AG04450 (cell line): ENCODE measurements at regions of chr4 and their contacts with region 1.

Region 1: DNA sequence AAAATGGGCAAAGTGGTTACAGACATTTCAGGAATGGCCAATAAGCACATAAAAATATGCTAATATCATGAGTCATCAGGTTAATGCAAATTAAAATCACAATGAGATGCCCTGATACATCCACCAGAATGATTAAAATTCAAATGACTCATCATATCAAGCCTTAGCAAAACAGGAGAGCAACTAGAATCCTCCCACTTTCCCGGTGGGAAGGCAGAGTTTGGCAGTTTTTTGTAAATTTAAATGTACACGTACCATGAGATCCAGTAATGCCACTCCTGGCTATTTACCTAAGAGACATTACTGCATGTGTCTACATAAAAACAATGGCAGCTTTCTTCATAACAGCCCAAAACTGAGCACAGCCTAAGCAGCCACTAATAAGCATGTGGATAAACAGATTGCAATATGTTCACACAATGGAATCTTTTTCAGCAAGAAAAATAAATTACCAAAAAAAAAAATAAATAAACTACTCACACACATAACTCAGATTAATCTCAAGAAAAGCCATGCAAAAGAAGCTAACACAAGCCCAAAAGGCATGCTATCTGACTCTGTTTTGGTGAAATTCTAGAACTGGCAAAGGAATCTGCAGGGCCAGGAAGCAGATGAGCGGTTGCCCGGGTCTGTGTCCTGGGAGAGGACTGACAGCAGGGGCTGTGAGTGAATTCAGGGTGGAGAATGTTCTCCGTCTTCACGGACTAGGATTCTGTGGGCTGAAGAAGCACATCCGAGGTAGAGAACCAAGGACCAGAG is 48.8 kb downstream of the AFAP1 start:
- DNase-seq: no peak
- H3K4me3 ChIP-seq: no peak overlapping the region
- H3K27ac ChIP-seq: peak overlapping the region; percentile 98
- H3K27me3 ChIP-seq: no peaks in the 10 kb centered on the region
- CTCF ChIP-seq: no peak

Region 2: DNA sequence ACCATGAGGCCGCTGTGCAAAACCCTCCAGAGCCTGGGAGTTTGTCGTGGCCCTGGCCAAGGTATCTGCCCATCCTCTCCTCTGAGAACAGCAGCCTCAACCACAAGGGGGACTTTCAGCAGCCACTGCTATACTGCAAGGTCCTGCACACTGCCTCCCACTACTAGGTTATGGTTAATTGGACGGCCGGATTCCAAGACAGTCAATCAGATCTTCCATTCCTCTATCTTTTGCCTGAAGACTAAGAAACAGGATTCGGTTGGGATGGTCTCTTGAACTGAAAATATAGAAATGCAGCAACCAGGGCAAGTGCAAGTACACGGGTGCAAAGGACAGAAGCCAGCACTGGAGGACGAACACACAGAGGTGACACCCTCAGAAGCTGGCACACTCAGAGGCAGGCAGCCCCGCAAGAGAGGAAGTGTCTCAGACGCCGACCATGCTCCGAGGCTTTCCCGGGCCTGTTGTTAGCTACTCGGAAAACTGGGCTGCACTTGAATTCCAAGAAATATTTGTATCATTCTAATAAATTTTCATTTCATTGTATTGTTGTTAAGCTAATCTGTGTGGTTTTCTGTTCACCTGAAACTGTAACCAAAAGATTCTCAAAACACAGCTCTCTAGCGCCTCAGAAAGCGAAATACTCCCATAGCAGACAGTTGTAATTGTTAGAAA is 14.5 kb before region 1 on chr4:
- CTCF ChIA-PET with region 1: interaction called, 3 read pairs
- POLR2A ChIA-PET with region 1: interaction called, 18 read pairs
- DNase-seq: no peak
- H3K4me3 ChIP-seq: peak overlapping the region; percentile 21
- H3K27ac ChIP-seq: peak overlapping the region; percentile 65
- H3K27me3 ChIP-seq: no peaks in the 10 kb centered on the region
- CTCF ChIP-seq: peak; percentile 61

Region 3: GRCh38 chr4:7910952-7911578 is 20.3 kb after region 1 on chr4:
- CTCF ChIA-PET with region 1: no interaction called
- POLR2A ChIA-PET with region 1: interaction called, 13 read pairs
- DNase-seq: peak; percentile 77
- H3K4me3 ChIP-seq: peak overlapping the region; percentile 34
- H3K27ac ChIP-seq: peak overlapping the region; percentile 97
- H3K27me3 ChIP-seq: no peaks in the 10 kb centered on the region
- CTCF ChIP-seq: no peak